ENCODE measurements at regions of chr1 and their contacts with region 1.

Region 1: DNA sequence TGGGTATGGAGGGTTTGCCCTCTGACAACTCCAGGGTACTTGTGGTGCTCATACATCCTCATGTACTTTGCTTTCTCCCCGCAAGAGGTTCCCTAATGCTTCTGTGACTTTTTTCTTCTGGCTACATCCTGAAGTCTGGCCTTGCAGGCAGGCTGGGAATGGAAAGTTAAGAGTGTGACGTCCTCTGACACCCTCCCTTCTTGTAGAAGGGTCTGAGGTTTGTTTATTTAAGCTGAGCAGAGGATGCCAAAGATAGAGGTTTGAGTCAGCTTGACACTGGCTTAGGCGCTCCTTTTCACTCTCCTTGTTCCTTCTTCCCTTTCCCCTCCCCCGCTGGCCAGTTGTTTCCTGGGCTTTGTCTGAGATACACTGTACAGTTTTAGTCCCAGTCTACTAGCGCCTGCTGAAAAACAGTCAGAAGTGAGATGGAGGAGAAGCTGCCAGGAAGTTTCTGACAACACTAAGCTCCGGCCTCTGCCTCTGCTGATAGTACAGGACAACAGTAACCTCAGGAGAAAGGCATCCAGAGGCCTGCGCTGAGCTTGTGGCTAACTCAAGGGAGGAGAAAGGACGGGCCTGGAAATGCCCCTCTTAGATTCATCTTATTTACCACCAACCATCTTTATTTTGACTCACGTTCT is at the start of gene MACF1:
- DNase-seq: peak in 2 of 5 donors; percentile 25 to 80
- H3K4me3 ChIP-seq: peak within 1 kb of the TSS; percentile 55 to 63
- H3K4me3 Mint-ChIP-seq: peak within 1 kb of the TSS; percentile 90 to 99 (median 96)
- H3K27ac ChIP-seq: peak within 1 kb of the TSS; percentile 78
- H3K27ac Mint-ChIP-seq: peak within 1 kb of the TSS; percentile 89 to 98 (median 94)
- H3K4me1 ChIP-seq: peaks cover 53% of the 10 kb centered on the region
- H3K4me1 Mint-ChIP-seq: peaks cover 38 to 72% (median 56%) of the 10 kb centered on the region in 4 donors
- H3K27me3 ChIP-seq: no peaks in the 10 kb centered on the region
- H3K27me3 Mint-ChIP-seq: no peaks in the 10 kb centered on the region
- total RNA-seq, gene MACF1: 329 to 387 TPM

Region 2: DNA sequence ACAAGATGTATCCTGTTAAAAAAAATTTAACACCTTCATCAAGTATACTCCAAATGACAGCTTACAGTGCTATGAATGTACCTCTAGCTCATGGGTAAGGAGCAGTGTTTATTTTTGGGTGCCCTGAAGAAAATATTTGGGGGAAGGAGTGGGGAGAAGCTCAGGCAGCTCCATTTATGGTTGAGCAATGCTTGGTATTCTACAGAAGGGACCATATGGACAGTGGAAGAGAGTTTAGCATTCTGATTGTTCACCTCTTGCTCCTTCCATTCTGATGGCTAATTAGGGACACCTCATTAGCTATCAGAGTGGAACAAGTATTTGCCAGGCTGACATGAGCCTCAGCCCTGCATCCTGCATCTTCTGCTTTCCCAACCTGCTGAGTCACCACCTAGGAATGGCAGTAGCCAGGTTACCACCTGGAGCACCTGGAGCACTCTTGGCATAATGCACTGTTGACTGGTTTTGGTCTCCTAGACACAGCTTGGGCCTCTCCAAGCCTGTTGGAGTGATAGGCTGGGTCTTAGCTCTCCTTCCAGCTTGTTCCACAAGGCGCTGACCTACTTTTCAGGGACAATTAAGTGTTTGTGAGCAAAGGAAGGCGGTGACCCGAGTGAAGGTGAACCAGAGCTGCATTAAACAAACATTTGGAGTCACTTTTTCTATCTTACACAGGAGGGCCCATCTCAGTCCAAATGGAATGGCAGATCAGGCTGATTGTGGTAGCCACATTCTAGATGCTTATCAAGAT is 62.0 kb before region 1 on chr1:
- CTCF ChIA-PET with region 1: no interaction called
- POLR2A ChIA-PET with region 1: no interaction called
- intact Hi-C with region 1: no loop called
- DNase-seq: no peak
- H3K4me3 ChIP-seq: no peak overlapping the region
- H3K4me3 Mint-ChIP-seq: no peak overlapping the region
- H3K27ac ChIP-seq: no peak overlapping the region
- H3K27ac Mint-ChIP-seq: no peak overlapping the region
- H3K4me1 ChIP-seq: no peaks in the 10 kb centered on the region
- H3K4me1 Mint-ChIP-seq: no peaks in the 10 kb centered on the region
- H3K27me3 ChIP-seq: no peaks in the 10 kb centered on the region
- H3K27me3 Mint-ChIP-seq: peaks cover 1 to 3% of the 10 kb centered on the region in 2 donors

Region 3: GRCh38 chr1:39183503-39184353 is 20.8 kb before region 1 on chr1:
- CTCF ChIA-PET with region 1: interaction called, 154 read pairs
- POLR2A ChIA-PET with region 1: interaction called, 18 read pairs
- intact Hi-C with region 1: no loop called
- DNase-seq: peak; percentile 83 to 95 (median 87)
- H3K4me3 ChIP-seq: no peak overlapping the region
- H3K4me3 Mint-ChIP-seq: peak overlapping the region in 5 of 8 donors; percentile 8 to 53 (median 35)
- H3K27ac ChIP-seq: peak overlapping the region; percentile 70
- H3K27ac Mint-ChIP-seq: peak overlapping the region; percentile 90 to 98 (median 96)
- H3K4me1 ChIP-seq: peaks cover 34% of the 10 kb centered on the region
- H3K4me1 Mint-ChIP-seq: peaks cover 18 to 44% (median 30%) of the 10 kb centered on the region in 4 donors
- H3K27me3 ChIP-seq: no peaks in the 10 kb centered on the region
- H3K27me3 Mint-ChIP-seq: no peaks in the 10 kb centered on the region

Region 4: DNA sequence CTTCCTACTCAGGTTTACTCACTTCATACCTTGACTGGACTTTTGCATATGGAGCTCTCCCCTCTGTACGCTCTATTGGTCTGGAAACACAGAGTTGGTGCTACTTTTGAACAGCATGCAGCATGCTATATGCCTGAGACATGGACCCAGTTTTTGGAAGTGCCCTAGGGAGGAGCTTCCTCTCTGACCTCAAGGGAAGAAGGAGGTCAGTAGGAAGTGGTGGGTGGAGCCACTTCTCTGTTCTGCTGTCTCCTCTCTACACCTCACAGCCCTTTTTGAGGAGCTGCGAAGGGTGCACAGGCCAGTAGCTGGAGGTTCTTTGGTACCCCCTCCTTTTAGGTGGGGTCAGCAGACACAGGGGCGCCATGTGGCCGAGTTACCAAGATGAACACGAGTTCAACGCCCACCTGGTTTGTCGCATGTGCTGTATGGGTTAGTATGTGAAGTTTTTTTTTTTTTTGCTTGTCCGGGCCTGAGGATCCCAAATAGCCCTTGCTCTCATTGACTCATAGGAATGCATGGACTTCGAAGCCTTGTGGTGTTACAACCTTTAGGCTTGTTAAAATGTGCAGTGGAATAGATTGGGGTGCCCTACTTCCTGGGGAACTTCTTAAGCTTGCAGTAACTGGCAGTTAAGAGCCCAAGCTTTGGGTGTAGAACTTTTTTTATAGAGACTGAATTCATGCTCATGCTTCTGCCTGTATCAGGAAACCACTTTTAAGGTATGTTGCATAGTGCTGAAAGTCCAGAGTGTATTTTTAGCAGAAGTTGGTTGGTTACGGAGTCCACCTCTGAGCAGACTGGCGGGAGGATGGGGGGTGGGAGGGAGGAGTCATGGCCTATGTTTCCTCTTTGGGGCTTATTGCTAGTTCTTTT is 10.7 kb after region 1 on chr1:
- CTCF ChIA-PET with region 1: interaction called, 46 read pairs
- POLR2A ChIA-PET with region 1: interaction called, 142 read pairs
- intact Hi-C with region 1: loop called (anchors 1 kb)
- DNase-seq: peak; percentile 34 to 70 (median 42)
- H3K4me3 ChIP-seq: peak overlapping the region; percentile 65 to 69
- H3K4me3 Mint-ChIP-seq: peak overlapping the region; percentile 92 to 99 (median 94)
- H3K27ac ChIP-seq: peak overlapping the region; percentile 75
- H3K27ac Mint-ChIP-seq: peak overlapping the region; percentile 89 to 96 (median 92)
- H3K4me1 ChIP-seq: peaks cover 58% of the 10 kb centered on the region
- H3K4me1 Mint-ChIP-seq: peaks cover 34 to 71% (median 48%) of the 10 kb centered on the region in 4 donors
- H3K27me3 ChIP-seq: no peaks in the 10 kb centered on the region
- H3K27me3 Mint-ChIP-seq: no peaks in the 10 kb centered on the region

Region 5: GRCh38 chr1:39230261-39231190 is 26.0 kb after region 1 on chr1:
- CTCF ChIA-PET with region 1: no interaction called
- POLR2A ChIA-PET with region 1: interaction called, 10 read pairs
- intact Hi-C with region 1: no loop called
- DNase-seq: peak in 3 of 5 donors; percentile 20 to 47 (median 23)
- H3K4me3 ChIP-seq: no peak overlapping the region
- H3K4me3 Mint-ChIP-seq: peak overlapping the region in 7 of 8 donors; percentile 22 to 81 (median 64)
- H3K27ac ChIP-seq: peak overlapping the region; percentile 44
- H3K27ac Mint-ChIP-seq: peak overlapping the region; percentile 59 to 90 (median 86)
- H3K4me1 ChIP-seq: peaks cover 64% of the 10 kb centered on the region
- H3K4me1 Mint-ChIP-seq: peaks cover 52 to 71% (median 62%) of the 10 kb centered on the region in 4 donors
- H3K27me3 ChIP-seq: no peaks in the 10 kb centered on the region
- H3K27me3 Mint-ChIP-seq: no peaks in the 10 kb centered on the region

Region 6: DNA sequence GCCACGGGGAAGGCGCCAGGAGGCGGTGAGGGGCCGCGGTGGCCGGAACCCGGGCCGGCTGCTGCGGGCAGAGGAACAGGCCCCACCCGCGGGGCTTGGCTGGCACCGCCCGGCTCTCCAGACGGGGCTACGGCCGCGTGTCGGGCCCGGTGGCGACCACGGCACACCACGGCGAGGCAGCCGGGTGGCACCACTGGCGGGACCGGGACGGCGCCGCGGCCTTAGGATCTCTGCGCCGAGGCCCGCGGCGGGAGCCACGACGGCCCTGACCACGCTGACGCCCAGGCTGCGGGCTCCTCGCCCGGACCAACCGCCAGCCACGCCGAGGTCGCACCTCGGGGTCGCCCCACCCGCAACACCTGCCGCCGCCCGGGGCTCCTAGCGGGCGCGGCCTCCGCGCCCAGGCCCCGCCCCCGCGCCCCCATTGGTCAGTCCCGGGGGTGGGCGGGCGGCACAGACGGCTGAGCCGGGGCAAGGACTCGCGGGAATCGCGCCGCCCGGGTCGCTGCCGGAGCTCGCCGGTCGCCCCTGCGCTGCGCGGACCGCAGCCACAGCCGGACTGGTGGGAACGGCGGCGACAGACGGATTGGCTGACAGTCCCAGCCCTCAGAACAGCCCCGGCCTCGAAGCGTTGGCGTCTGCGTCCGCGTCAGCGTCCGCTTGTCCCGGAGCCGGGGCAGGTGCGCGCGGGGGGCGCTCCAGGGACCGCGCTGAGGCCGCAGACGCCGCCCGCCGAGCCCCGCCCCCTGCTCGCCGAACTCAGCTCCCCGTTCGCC is 286.8 kb after region 1 on chr1 and contains the start of gene BMP8A:
- CTCF ChIA-PET with region 1: no interaction called
- POLR2A ChIA-PET with region 1: no interaction called
- intact Hi-C with region 1: no loop called
- DNase-seq: peak; percentile 71 to 77 (median 76)
- H3K4me3 ChIP-seq: peak within 1 kb of the TSS in 1 of 2 donors; percentile 45
- H3K4me3 Mint-ChIP-seq: peak within 1 kb of the TSS; percentile 55 to 79 (median 72)
- H3K27ac ChIP-seq: no peak within 1 kb of the TSS
- H3K27ac Mint-ChIP-seq: peak within 1 kb of the TSS in 3 of 7 donors; percentile 70 to 83 (median 71)
- H3K4me1 ChIP-seq: peaks cover 4% of the 10 kb centered on the region
- H3K4me1 Mint-ChIP-seq: peaks cover 2 to 12% (median 5%) of the 10 kb centered on the region in 4 donors
- H3K27me3 ChIP-seq: peaks cover 7% of the 10 kb centered on the region
- H3K27me3 Mint-ChIP-seq: peaks cover 10 to 11% of the 10 kb centered on the region in 2 donors
- total RNA-seq, gene BMP8A: not detected

Region 7: DNA sequence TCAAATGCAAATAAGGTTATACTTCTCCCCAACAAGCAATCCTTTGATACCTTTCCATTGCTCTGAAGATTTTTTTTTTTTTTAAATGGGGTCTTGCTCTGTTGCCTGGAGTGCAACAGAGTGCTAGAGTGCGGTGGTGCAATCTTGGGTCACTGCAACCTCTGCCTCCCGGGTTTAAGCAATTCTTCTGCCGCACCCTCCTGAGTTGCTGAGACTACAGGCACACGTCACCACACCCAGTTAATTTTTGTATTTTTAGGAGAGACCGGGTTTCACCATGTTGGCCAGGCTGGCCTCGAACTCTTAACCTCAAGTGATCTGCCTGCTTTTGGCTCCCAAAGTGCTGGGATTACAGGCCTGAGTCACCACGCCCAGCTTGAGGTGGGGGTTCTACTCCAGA is 599.4 kb after region 1 on chr1:
- CTCF ChIA-PET with region 1: no interaction called
- POLR2A ChIA-PET with region 1: no interaction called
- intact Hi-C with region 1: no loop called
- DNase-seq: no peak
- H3K4me3 ChIP-seq: no peak overlapping the region
- H3K4me3 Mint-ChIP-seq: no peak overlapping the region
- H3K27ac ChIP-seq: no peak overlapping the region
- H3K27ac Mint-ChIP-seq: no peak overlapping the region
- H3K4me1 ChIP-seq: peaks cover 2% of the 10 kb centered on the region
- H3K4me1 Mint-ChIP-seq: peaks cover 3 to 10% (median 6%) of the 10 kb centered on the region in 4 donors
- H3K27me3 ChIP-seq: no peaks in the 10 kb centered on the region
- H3K27me3 Mint-ChIP-seq: no peaks in the 10 kb centered on the region

Measured in CD4-positive, alpha-beta memory T cell (primary cell).